ENCODE measurements at regions of chr1 and their contacts with region 1.

Region 1: GRCh38 chr1:44002606-44003157 is 11.3 kb downstream of the CCDC24 start:
- DNase-seq: no peak
- H3K4me3 ChIP-seq: no peak overlapping the region
- H3K27ac ChIP-seq: no peak overlapping the region
- H3K4me1 ChIP-seq: no peaks in the 10 kb centered on the region
- H3K27me3 ChIP-seq: no peaks in the 10 kb centered on the region

Region 2: DNA sequence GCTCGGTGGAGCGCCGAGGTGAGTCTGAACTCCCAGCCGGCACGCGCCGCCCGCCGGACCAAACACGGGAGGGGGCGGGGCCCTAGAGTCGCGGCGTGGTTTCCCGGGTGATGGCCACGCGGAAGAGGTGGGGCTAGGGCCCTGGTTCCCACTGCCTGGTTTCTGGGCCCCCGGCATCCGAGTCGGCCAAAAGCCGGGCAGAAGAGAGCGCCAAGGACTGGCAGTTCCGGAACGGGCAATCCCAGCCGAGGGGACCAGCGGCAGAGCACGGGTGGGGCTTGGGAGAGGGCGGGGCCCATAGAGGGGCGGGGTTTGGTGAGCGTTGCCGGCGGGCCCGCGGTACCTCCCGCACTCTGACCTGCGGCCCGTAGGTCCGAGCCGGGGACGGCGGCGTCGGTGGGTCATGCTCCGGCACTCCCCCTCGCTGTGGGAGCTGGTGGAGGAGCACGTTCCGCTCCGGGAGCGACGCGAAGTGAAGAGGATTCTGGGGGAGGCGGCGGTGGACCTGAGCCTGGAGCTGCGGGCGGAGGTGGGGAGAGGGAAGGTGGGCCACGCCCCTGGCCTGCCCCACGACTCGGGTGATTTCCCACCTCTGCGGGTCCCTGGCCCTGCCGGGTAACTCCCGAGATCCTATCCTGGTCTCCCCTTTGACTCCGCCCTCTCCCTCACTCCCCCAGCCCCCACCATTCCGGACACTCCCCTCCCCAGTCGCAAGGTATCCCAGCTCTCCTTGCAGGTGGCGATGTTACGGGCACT is 11.0 kb before region 1 on chr1 and contains the start of gene CCDC24:
- CTCF ChIA-PET with region 1: interaction called, 38 read pairs
- POLR2A ChIA-PET with region 1: no interaction called
- DNase-seq: peak; percentile 28 to 66 (median 51)
- H3K4me3 ChIP-seq: peak within 1 kb of the TSS; percentile 49 to 87 (median 72)
- H3K27ac ChIP-seq: peak within 1 kb of the TSS in 1 of 2 experiments; percentile 49
- H3K4me1 ChIP-seq: peaks cover 0 to 28% (median 28%) of the 10 kb centered on the region in 4 experiments
- H3K27me3 ChIP-seq: no peaks in the 10 kb centered on the region

Region 3: DNA sequence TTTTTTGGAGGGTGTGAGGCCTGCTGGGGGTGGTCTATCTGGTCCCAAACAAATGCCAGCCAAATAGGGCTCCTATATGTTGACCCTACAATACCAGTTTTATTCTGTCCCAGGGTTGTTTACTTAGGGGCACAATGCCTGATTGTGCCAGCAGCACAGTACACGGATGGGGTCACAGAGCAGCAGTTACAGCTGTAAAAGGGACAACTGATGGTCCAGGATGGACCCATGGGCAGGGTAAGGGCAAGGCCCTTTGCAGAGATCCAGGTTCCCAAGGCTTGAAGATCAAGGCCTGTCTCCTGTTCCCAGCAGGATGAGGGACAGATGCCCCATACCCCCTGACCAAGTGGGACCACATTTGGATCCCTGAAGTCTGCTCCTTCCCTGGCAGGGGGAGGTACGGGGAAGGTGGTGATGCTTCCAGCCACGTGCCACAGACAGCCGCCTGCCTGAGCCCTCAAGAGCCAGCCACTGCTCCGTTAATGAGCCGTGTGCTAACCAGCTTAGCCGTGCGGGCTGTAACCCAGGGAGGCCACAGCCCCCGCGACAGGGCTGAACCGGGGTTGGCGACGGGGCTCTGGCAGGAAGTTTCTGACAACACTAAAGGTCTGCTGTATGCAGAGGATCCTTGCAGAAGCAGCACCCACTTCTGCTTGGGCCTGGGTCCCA is 10.4 kb after region 1 on chr1:
- CTCF ChIA-PET with region 1: interaction called, 51 read pairs
- POLR2A ChIA-PET with region 1: no interaction called
- DNase-seq: peak in 2 of 3 donors; percentile 72 to 78
- H3K4me3 ChIP-seq: no peak overlapping the region
- H3K27ac ChIP-seq: no peak overlapping the region
- H3K4me1 ChIP-seq: peaks cover 0 to 32% (median 24%) of the 10 kb centered on the region in 4 experiments
- H3K27me3 ChIP-seq: no peaks in the 10 kb centered on the region

Region 4: GRCh38 chr1:44030605-44031251 is 28.0 kb after region 1 on chr1:
- CTCF ChIA-PET with region 1: interaction called, 89 read pairs
- POLR2A ChIA-PET with region 1: no interaction called
- DNase-seq: peak; percentile 64 to 80 (median 70)
- H3K4me3 ChIP-seq: peak overlapping the region; percentile 69 to 93 (median 77)
- H3K27ac ChIP-seq: peak overlapping the region in 1 of 2 experiments; percentile 75
- H3K4me1 ChIP-seq: peaks cover 0 to 33% (median 22%) of the 10 kb centered on the region in 4 experiments
- H3K27me3 ChIP-seq: peaks cover 0 to 9% (median 0%) of the 10 kb centered on the region in 5 experiments

Region 5: GRCh38 chr1:44049839-44050238 is 47.2 kb after region 1 on chr1:
- CTCF ChIA-PET with region 1: interaction called, 93 read pairs
- POLR2A ChIA-PET with region 1: no interaction called
- DNase-seq: no peak
- H3K4me3 ChIP-seq: no peak overlapping the region
- H3K27ac ChIP-seq: no peak overlapping the region
- H3K4me1 ChIP-seq: peaks cover 5 to 29% (median 20%) of the 10 kb centered on the region in 4 experiments
- H3K27me3 ChIP-seq: no peaks in the 10 kb centered on the region

Measured in common myeloid progenitor, CD34-positive (primary cell).